ENCODE measurements at regions of chr3 and their contacts with region 1.

Region 1: GRCh38 chr3:49539659-49540560 is 14.4 kb upstream of the BSN start:
- DNase-seq: peak; percentile 86
- H3K4me3 Mint-ChIP-seq: peak overlapping the region; percentile 68
- H3K27ac Mint-ChIP-seq: no peak overlapping the region
- H3K4me1 Mint-ChIP-seq: peaks cover 5% of the 10 kb centered on the region
- H3K27me3 Mint-ChIP-seq: peaks cover 17% of the 10 kb centered on the region

Region 2: GRCh38 chr3:49553692-49554632 is 14.1 kb after region 1 on chr3 and contains the start of gene BSN:
- intact Hi-C with region 1: loop called (anchors 2 kb)
- DNase-seq: peak; percentile 81
- H3K4me3 Mint-ChIP-seq: peak within 1 kb of the TSS; percentile 87
- H3K27ac Mint-ChIP-seq: peak within 1 kb of the TSS; percentile 36
- H3K4me1 Mint-ChIP-seq: peaks cover 15% of the 10 kb centered on the region
- H3K27me3 Mint-ChIP-seq: peaks cover 50% of the 10 kb centered on the region
- total RNA-seq, gene BSN: 0.09 and 0.11 TPM in 2 replicates